GM12878 (cell line): ENCODE measurements at regions of chr6 and their contacts with region 1.

Region 1: GRCh38 chr6:166402582-166403277 is 20.0 kb upstream of the MPC1 start:
- DNase-seq: no peak
- ATAC-seq: no peak
- H3K4me3 ChIP-seq: no peak overlapping the region
- H3K27ac ChIP-seq: no peak overlapping the region
- H3K4me1 ChIP-seq: no peaks in the 10 kb centered on the region
- H3K27me3 ChIP-seq: no peaks in the 10 kb centered on the region
- CTCF ChIP-seq: no peak
- EP300 ChIP-seq: no peak
- POLR2A ChIP-seq: no peak
- RAD21 ChIP-seq: no peak

Region 2: DNA sequence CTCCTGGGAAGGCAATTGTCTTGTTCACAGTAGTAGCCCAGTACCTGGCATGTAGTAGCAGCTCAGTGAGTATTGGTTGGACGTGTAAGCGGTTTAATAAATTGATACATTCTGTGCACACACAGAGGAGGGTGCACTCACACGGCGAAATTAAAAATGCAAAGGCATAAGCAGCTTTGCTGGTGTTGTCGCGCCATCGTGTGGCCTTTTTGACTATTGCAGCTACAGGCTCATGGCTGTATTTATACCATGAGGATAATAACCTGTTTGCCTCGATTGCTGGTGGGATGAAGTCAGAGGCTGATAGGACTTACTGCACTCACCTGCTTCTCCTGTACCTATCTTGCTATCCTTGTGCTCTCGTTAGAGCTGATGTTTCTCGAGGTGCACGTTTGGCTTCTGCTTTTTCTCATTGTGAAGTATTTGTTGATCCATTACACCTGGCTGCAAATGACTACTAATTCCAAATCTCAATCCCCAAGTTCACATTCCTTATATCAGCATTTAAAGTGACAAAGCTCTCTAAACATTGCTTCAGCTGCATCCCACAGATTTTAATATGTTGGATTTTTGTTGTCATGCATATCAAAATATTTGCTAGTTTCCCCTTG is 296.5 kb before region 1 on chr6:
- CTCF ChIA-PET with region 1: interaction called, 4 read pairs
- POLR2A ChIA-PET with region 1: no interaction called
- RAD21 ChIA-PET with region 1: no interaction called
- SMC1A ChIA-PET with region 1: no interaction called
- in situ Hi-C with region 1: no loop called
- intact Hi-C with region 1: loop called (anchors 5 kb)
- DNase-seq: peak; percentile 36
- ATAC-seq: peak; percentile 84
- H3K4me3 ChIP-seq: no peak overlapping the region
- H3K27ac ChIP-seq: no peak overlapping the region
- H3K4me1 ChIP-seq: no peaks in the 10 kb centered on the region; the same call in 1 of the 2 replicates
- H3K27me3 ChIP-seq: no peaks in the 10 kb centered on the region
- CTCF ChIP-seq: peak; percentile 81 to 95 (median 90)
- EP300 ChIP-seq: no peak
- POLR2A ChIP-seq: no peak
- RAD21 ChIP-seq: peak; percentile 91

Region 3: DNA sequence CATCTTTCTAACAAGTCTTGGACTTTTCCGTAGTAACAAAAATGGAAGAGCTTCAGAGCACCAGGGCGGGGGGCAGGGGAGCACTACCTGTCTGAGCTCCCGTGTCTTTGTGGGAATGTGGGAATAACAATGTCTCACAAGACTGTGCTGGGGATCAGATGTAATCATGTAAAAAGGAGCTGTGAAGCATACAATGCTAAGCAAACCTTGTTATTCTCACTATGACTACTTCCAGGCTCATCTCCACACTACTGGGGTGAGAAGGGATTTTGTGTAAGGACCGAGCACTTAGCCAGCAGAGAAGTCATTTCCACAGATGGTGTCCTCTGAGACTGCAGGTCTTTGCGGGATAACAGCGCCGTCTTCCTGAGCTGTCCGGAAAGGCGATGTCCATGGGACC is 121.6 kb before region 1 on chr6:
- CTCF ChIA-PET with region 1: interaction called, 105 read pairs
- POLR2A ChIA-PET with region 1: no interaction called
- RAD21 ChIA-PET with region 1: interaction called, 54 read pairs
- SMC1A ChIA-PET with region 1: interaction called, 56 read pairs
- in situ Hi-C with region 1: no loop called
- intact Hi-C with region 1: no loop called
- DNase-seq: no peak
- ATAC-seq: peak; percentile 67
- H3K4me3 ChIP-seq: no peak overlapping the region
- H3K27ac ChIP-seq: peak overlapping the region; percentile 48
- H3K4me1 ChIP-seq: peaks cover 38% of the 10 kb centered on the region
- H3K27me3 ChIP-seq: no peaks in the 10 kb centered on the region
- CTCF ChIP-seq: no peak
- EP300 ChIP-seq: no peak
- POLR2A ChIP-seq: no peak
- RAD21 ChIP-seq: no peak

Region 4: DNA sequence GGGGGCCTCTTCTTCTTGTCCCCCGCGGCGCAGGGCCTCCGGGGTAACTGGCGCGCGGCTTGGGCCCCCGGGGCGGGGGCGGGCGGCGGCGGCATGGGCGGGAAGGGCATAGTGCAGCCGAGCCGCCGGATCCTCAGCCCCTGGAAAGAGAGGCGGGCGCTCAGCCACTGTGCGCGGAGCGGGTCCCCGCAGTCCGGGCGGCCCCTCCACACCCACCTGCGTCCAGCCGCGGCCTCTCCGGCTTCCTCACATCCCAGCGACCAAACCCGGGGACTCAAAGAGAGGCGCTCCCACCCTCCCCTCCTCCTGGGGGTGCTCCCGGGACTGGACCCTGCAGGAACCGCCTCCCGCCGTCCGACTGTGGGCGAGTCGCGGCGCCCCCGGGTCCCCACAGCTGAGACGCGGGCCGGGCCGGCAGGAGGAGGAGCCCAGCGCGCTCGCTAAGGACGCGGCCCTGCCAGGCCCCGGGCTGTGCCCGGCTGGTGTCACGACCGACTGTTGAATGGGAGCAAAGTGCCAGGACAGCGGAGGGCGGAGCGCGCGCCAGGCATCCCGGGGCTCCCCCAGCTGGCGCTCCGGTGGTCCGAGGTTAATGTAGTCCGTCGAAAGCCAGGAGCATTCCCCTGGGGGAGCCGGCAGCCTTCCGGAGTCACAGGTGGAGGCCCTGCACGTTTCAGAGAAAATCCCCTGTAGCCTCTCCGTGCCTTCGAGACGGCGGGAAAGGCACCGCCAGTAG is 94.5 kb before region 1 on chr6 and contains the start of gene PRR18:
- CTCF ChIA-PET with region 1: interaction called, 317 read pairs
- POLR2A ChIA-PET with region 1: interaction called, 4 read pairs
- RAD21 ChIA-PET with region 1: interaction called, 165 read pairs
- SMC1A ChIA-PET with region 1: interaction called, 72 read pairs
- in situ Hi-C with region 1: no loop called
- intact Hi-C with region 1: loop called (anchors 1 kb)
- DNase-seq: peak; percentile 42
- ATAC-seq: peak; percentile 77
- H3K4me3 ChIP-seq: peak within 1 kb of the TSS; percentile 67
- H3K27ac ChIP-seq: peak within 1 kb of the TSS; percentile 48; the same call in 1 of the 2 replicates
- H3K4me1 ChIP-seq: no peaks in the 10 kb centered on the region
- H3K27me3 ChIP-seq: no peaks in the 10 kb centered on the region; a peak in 2 of 4 replicates
- CTCF ChIP-seq: no peak
- EP300 ChIP-seq: no peak
- POLR2A ChIP-seq: peak; percentile 52; the same call in 1 of the 2 replicates
- RAD21 ChIP-seq: no peak
- polyA plus RNA-seq, gene PRR18: 0.26 to 0.84 TPM

Region 5: DNA sequence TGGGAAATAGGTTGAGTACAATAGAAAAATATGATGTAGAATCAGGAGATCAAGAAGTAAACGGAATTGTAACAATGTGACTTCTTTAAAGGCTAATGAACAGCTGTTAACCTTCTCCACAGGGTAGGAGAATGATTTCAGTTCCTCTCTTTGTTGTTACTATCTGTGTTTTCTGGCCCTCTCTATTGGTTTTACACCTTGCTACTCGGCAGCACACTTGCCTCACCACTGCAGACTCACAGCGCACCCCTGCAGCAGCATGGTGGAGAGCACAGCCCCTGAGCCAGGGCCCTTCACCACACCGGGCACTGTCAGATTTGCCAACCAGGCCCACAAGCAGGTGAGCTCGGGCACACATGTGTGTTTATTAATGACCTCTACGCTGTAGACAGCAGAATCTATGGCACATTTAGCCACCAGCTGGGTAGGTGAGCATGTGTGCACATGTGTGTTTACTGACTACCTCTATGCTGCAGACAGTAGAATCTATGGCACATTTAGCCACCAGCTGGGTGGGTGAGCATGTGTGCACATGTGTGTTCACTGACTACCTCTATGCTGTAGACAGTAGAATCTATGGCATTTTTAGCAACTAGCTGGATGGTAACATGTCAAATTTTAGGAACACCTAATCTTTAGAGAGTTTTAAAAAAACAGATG is 77.2 kb before region 1 on chr6:
- CTCF ChIA-PET with region 1: interaction called, 25 read pairs
- POLR2A ChIA-PET with region 1: interaction called, 10 read pairs
- RAD21 ChIA-PET with region 1: interaction called, 13 read pairs
- SMC1A ChIA-PET with region 1: interaction called, 16 read pairs
- in situ Hi-C with region 1: no loop called
- intact Hi-C with region 1: no loop called
- DNase-seq: peak; percentile 43
- ATAC-seq: peak; percentile 96
- H3K4me3 ChIP-seq: no peak overlapping the region
- H3K27ac ChIP-seq: peak overlapping the region; percentile 4; the same call in 1 of the 2 replicates
- H3K4me1 ChIP-seq: peaks cover 11% of the 10 kb centered on the region
- H3K27me3 ChIP-seq: no peaks in the 10 kb centered on the region
- CTCF ChIP-seq: no peak; a peak in 1 of 6 replicates
- EP300 ChIP-seq: peak; percentile 60 to 84; a peak in 3 of 4 replicates
- POLR2A ChIP-seq: no peak
- RAD21 ChIP-seq: no peak